Right lobe of liver (tissue), 6 donors: ENCODE measurements at regions of chr2 and their contacts with region 1.

Region 1: GRCh38 chr2:68362069-68362468 is 3.0 kb upstream of the PLEK start:
- DNase-seq: peak; percentile 80 to 83 (median 82)
- ATAC-seq: peak; percentile 86 to 95 (median 91)
- H3K4me3 ChIP-seq: no peak overlapping the region
- H3K27ac ChIP-seq: no peak overlapping the region
- H3K4me1 ChIP-seq: peaks cover 0 to 5% (median 0%) of the 10 kb centered on the region in 4 donors
- H3K27me3 ChIP-seq: no peaks in the 10 kb centered on the region
- CTCF ChIP-seq: peak; percentile 84 to 93 (median 88)
- POLR2A ChIP-seq: no peak

Region 2: GRCh38 chr2:67631483-67631882 is 730.6 kb before region 1 on chr2:
- intact Hi-C with region 1: no loop called
- DNase-seq: no peak
- ATAC-seq: no peak
- H3K4me3 ChIP-seq: no peak overlapping the region
- H3K27ac ChIP-seq: no peak overlapping the region
- H3K4me1 ChIP-seq: no peaks in the 10 kb centered on the region
- H3K27me3 ChIP-seq: no peaks in the 10 kb centered on the region
- CTCF ChIP-seq: no peak
- POLR2A ChIP-seq: no peak

Region 3: DNA sequence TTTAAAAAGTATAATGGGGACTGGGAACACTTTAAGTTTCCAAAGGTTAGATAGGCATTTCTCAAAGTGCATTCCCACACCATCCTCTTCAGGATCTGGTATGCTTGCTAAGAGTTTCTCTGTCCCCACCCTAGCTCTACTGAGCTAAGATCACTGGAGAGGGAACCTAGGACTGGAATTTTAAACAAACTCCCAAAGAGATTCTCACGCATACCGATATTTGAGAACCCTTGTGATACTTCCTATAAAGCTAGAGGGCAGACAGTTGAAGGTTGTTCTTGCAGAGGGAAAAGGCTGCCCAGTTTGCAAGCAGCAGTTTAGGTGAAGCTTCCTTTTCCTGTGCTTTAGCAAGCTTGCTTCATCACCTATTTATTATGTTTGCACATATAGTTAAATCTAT is 46.0 kb before region 1 on chr2:
- intact Hi-C with region 1: no loop called
- DNase-seq: no peak
- ATAC-seq: no peak
- H3K4me3 ChIP-seq: no peak overlapping the region
- H3K27ac ChIP-seq: no peak overlapping the region
- H3K4me1 ChIP-seq: peaks cover 0 to 9% (median 0%) of the 10 kb centered on the region in 4 donors
- H3K27me3 ChIP-seq: peaks cover 0 to 18% of the 10 kb centered on the region in 2 donors
- CTCF ChIP-seq: no peak
- POLR2A ChIP-seq: no peak

Region 4: DNA sequence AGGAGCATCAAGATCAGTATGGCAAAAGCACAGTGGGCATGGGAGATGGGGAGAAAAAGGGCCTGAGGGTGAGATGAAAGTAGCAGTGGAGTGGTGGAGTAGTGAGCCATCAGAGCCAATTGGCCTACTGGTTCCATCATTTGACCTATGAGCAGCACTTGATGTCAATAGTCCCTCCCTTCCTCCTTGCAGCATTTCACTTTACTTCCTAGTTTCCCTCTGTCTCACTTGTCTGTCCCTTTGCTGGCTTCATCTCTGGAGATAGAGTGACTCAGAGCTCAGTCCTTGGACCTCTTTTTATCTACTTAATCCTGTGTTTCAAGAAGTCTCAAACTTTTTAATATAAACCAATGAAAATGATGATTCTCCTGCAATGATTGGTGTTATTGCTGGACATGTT is 72.9 kb after region 1 on chr2:
- intact Hi-C with region 1: loop called (anchors 10 kb)
- DNase-seq: no peak
- ATAC-seq: no peak
- H3K4me3 ChIP-seq: no peak overlapping the region
- H3K27ac ChIP-seq: no peak overlapping the region
- H3K4me1 ChIP-seq: peaks cover 0 to 29% (median 8%) of the 10 kb centered on the region in 4 donors
- H3K27me3 ChIP-seq: no peaks in the 10 kb centered on the region
- CTCF ChIP-seq: no peak
- POLR2A ChIP-seq: no peak

Region 5: GRCh38 chr2:68441179-68441993 is 79.3 kb after region 1 on chr2:
- intact Hi-C with region 1: loop called (anchors 10 kb)
- DNase-seq: peak; percentile 66 to 85 (median 72)
- ATAC-seq: peak; percentile 92 to 95 (median 94)
- H3K4me3 ChIP-seq: no peak overlapping the region
- H3K27ac ChIP-seq: peak overlapping the region in 2 of 3 donors; percentile 25 to 69
- H3K4me1 ChIP-seq: peaks cover 0 to 15% (median 9%) of the 10 kb centered on the region in 4 donors
- H3K27me3 ChIP-seq: no peaks in the 10 kb centered on the region
- CTCF ChIP-seq: peak; percentile 91 to 98 (median 94)
- POLR2A ChIP-seq: no peak